ENCODE measurements at regions of chr7 and their contacts with region 1.

Region 1: GRCh38 chr7:87312215-87312865 is 33.1 kb upstream of the CROT start:
- DNase-seq: peak in 5 of 6 donors; percentile 26 to 66 (median 38)
- ATAC-seq: peak; percentile 80 to 97 (median 94)
- H3K4me3 ChIP-seq: no peak overlapping the region
- H3K27ac ChIP-seq: no peak overlapping the region
- H3K4me1 ChIP-seq: no peaks in the 10 kb centered on the region
- H3K27me3 ChIP-seq: no peaks in the 10 kb centered on the region
- CTCF ChIP-seq: peak; percentile 88 to 95 (median 92)

Region 2: GRCh38 chr7:87144173-87144657 is 168.1 kb before region 1 on chr7:
- intact Hi-C with region 1: no loop called
- DNase-seq: no peak
- ATAC-seq: no peak
- H3K4me3 ChIP-seq: no peak overlapping the region
- H3K27ac ChIP-seq: no peak overlapping the region
- H3K4me1 ChIP-seq: no peaks in the 10 kb centered on the region
- H3K27me3 ChIP-seq: no peaks in the 10 kb centered on the region
- CTCF ChIP-seq: no peak

Region 3: GRCh38 chr7:87404674-87405073 is 92.3 kb after region 1 on chr7:
- intact Hi-C with region 1: loop called in 1 of 3 experiments (anchors 5 kb)
- DNase-seq: no peak
- ATAC-seq: no peak
- H3K4me3 ChIP-seq: no peak overlapping the region
- H3K27ac ChIP-seq: no peak overlapping the region
- H3K4me1 ChIP-seq: no peaks in the 10 kb centered on the region
- H3K27me3 ChIP-seq: no peaks in the 10 kb centered on the region
- CTCF ChIP-seq: no peak

Region 4: GRCh38 chr7:87416682-87417587 is 104.6 kb after region 1 on chr7:
- intact Hi-C with region 1: loop called (anchors 5 to 10 kb)
- DNase-seq: peak in 4 of 6 donors; percentile 16 to 55 (median 25)
- ATAC-seq: peak in 3 of 4 donors; percentile 69 to 78 (median 75)
- H3K4me3 ChIP-seq: no peak overlapping the region
- H3K27ac ChIP-seq: no peak overlapping the region
- H3K4me1 ChIP-seq: no peaks in the 10 kb centered on the region
- H3K27me3 ChIP-seq: no peaks in the 10 kb centered on the region
- CTCF ChIP-seq: peak; percentile 29 to 60 (median 40)